ENCODE measurements at regions of chr11 and their contacts with region 1.

Region 1: GRCh38 chr11:104968355-104968855 is at the start of gene CASP4:
- DNase-seq: peak; percentile 93
- H3K4me3 ChIP-seq: peak within 1 kb of the TSS; percentile 48 to 93 (median 91)
- H3K27ac ChIP-seq: peak within 1 kb of the TSS; percentile 92
- H3K4me1 ChIP-seq: peaks cover 20% of the 10 kb centered on the region
- H3K27me3 ChIP-seq: no peaks in the 10 kb centered on the region
- CTCF ChIP-seq: no peak
- POLR2A ChIP-seq: peak; percentile 56
- total RNA-seq, gene CASP4: 77.4 and 83.1 TPM in 2 replicates

Region 2: GRCh38 chr11:104918113-104918824 is 50.1 kb before region 1 on chr11:
- CTCF ChIA-PET with region 1: no interaction called
- POLR2A ChIA-PET with region 1: no interaction called
- dilution Hi-C with region 1: no loop called
- intact Hi-C with region 1: loop called (anchors 1 kb)
- DNase-seq: peak; percentile 98
- H3K4me3 ChIP-seq: peak overlapping the region; percentile 55 to 81 (median 65)
- H3K27ac ChIP-seq: peak overlapping the region; percentile 81
- H3K4me1 ChIP-seq: peaks cover 25% of the 10 kb centered on the region
- H3K27me3 ChIP-seq: no peaks in the 10 kb centered on the region
- CTCF ChIP-seq: no peak
- POLR2A ChIP-seq: no peak

Region 3: DNA sequence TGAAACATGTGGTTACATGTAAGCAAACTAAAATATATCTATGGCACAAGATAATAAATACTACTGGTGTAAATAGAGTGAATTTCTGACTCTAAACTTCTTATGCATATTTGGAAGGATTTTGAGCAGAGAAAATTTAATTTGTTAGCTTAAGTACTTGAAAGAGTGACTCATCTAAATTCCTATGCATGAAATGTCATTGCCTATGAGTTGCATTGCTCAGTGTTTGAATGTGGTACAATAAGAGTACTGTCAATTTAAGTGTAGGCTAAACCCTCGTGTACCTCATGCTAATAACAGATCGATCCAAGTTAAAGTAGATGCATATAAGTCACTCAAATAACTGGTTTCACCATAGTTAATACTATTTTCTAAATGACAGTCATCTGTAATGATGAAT is 176.5 kb after region 1 on chr11:
- CTCF ChIA-PET with region 1: no interaction called
- POLR2A ChIA-PET with region 1: no interaction called
- dilution Hi-C with region 1: no loop called
- intact Hi-C with region 1: loop called (anchors 5 kb)
- DNase-seq: peak; percentile 36
- H3K4me3 ChIP-seq: no peak overlapping the region
- H3K27ac ChIP-seq: no peak overlapping the region
- H3K4me1 ChIP-seq: peaks cover 22% of the 10 kb centered on the region
- H3K27me3 ChIP-seq: no peaks in the 10 kb centered on the region
- CTCF ChIP-seq: no peak
- POLR2A ChIP-seq: no peak

Region 4: DNA sequence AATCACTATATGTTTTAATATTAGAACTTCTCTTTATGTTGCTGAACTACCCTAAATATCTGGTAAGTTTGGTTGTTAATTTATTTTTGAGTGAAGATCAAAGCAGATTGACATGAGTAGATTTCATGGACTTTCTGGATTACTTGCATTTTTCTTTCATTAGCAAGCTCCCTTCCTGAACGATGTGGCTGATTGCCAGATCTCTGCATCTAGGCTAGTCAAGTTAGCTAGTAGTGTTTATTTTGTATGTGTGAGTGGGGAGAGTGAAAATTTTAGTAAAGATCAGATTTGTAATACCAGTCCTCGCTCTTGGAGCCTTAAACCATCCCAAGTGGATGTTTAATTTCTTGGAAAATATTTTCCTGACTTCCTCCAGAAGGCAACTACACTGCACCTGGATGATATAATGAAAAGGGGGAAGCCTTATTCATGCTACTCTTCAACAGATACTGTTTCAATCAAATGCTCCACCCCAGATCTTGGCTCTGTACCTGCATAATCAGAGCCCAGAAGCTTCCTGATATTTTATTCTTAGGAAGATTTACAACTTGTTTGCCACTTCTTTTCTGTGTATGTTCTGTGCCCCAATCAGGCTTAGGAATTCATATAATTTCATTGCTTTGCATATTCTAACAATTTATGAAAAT is 498.3 kb after region 1 on chr11:
- CTCF ChIA-PET with region 1: no interaction called
- POLR2A ChIA-PET with region 1: no interaction called
- dilution Hi-C with region 1: no loop called
- intact Hi-C with region 1: loop called (anchors 5 kb)
- DNase-seq: peak; percentile 91
- H3K4me3 ChIP-seq: no peak overlapping the region
- H3K27ac ChIP-seq: peak overlapping the region; percentile 11
- H3K4me1 ChIP-seq: peaks cover 17% of the 10 kb centered on the region
- H3K27me3 ChIP-seq: no peaks in the 10 kb centered on the region
- CTCF ChIP-seq: no peak
- POLR2A ChIP-seq: no peak

Region 5: DNA sequence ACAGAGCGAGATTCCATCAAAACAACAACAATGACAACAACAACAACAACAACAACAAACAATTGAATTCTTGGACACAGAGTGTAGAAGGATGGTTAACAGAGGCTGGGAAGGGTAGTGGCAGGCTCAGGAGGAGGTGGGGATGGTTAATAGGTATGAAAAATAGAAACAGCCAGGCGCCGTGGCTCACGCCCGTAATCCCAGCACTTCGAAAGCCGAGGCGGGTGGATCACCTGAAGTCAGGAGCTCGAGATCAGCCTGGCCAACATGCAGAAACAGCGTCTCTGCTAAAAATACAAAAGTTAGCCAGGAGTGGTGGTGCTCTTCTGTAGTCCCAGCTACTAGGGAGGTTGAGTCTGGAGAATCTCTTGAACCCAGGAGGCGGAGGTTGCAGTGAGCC is 518.5 kb after region 1 on chr11:
- CTCF ChIA-PET with region 1: no interaction called
- POLR2A ChIA-PET with region 1: no interaction called
- dilution Hi-C with region 1: no loop called
- intact Hi-C with region 1: no loop called
- DNase-seq: no peak
- H3K4me3 ChIP-seq: no peak overlapping the region
- H3K27ac ChIP-seq: no peak overlapping the region
- H3K4me1 ChIP-seq: no peaks in the 10 kb centered on the region
- H3K27me3 ChIP-seq: no peaks in the 10 kb centered on the region
- CTCF ChIP-seq: no peak
- POLR2A ChIP-seq: no peak

Measured in endothelial cell of umbilical vein (primary cell).